ENCODE measurements at regions of chr9 and their contacts with region 1.

Region 1: DNA sequence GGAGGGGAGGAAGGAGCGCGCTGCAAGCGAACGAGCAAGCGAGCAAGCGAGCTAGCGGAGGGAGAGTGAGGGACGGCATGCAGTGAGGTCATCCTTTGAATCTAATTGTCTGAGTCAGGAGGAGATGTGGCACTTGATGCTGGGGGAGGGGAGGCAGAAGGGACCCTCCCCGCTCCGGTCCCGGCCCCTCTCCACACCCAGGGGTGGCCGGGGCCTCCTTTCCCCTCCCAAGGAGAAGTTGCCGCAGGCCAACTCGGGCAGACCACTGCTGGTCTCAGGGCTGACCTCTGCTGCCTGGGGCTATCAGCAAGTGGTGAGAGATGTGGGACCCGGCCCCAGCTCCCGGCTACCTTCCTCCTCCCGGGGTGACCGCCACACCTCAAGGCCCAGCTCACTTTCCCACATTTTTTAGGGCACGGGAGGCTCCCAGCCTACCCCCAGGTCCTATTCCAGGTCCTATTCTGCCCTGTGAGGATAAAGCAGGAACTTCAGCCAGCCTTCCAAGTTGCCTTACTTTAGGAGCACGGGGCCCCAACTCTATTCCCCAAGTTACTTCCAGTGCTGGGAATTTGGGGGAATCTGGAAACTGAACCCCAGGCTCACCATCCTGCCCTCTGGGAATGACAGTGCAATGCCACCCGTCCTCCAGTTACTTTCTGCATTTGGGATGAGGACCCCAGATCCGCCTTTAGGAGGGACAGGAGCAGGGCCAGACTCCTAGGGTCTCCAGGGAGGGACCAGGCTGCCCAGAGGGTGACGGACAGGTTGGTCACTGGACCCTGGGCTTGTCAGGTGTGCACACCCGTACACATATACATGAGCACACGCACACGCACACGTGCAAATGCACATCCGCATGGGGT is 11.1 kb downstream of the CNTFR start:
- DNase-seq: no peak
- H3K4me3 ChIP-seq: peak overlapping the region; percentile 21 to 67 (median 49)
- H3K27ac ChIP-seq: peak overlapping the region in 1 of 2 donors; percentile 70
- H3K4me1 ChIP-seq: no peaks in the 10 kb centered on the region
- H3K27me3 ChIP-seq: peaks cover 0 to 15% of the 10 kb centered on the region in 2 donors
- CTCF ChIP-seq: no peak
- POLR2A ChIP-seq: no peak

Region 2: DNA sequence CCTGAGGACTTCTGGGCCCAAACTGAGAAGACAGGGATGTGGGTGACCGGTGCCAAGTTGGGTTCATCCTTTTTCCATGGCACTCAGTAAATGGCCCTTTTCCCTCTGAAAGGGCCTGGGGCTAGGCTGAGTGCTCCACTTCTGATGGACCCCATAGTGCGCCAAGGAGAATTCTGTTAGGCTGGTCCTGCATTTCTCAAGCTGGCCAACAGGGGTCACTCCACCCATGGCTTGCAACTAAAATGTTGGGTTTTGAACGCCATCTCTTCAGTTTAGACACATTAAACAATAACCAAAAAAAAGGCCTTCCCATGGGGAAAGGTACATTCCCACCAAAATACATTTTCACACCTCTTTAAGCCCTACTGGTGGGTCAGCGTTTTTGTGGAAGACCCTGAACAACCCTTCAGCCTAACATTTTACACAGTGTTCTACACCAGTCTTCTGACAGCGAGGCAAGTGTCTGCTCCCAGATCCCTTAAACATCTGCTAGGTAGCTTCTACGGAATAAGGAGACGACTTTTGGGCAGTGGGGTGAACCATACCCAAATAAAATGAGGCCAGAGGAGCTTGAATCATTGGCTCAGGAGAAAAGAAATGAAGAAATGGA is 16.2 kb before region 1 on chr9:
- intact Hi-C with region 1: loop called (anchors 2 kb)
- DNase-seq: no peak
- H3K4me3 ChIP-seq: no peak overlapping the region
- H3K27ac ChIP-seq: no peak overlapping the region
- H3K4me1 ChIP-seq: peaks cover 5 to 10% of the 10 kb centered on the region in 2 donors
- H3K27me3 ChIP-seq: peaks cover 0 to 3% of the 10 kb centered on the region in 2 donors
- CTCF ChIP-seq: peak; percentile 16 to 30 (median 18)
- POLR2A ChIP-seq: no peak

Measured in breast epithelium (tissue), 4 donors.